Heart right ventricle (tissue), 16 donors: ENCODE measurements at regions of chr11 and their contacts with region 1.

Region 1: GRCh38 chr11:2892215-2893020 is 6.8 kb upstream of the CDKN1C start:
- DNase-seq: peak; percentile 57 to 83
- ATAC-seq: peak; percentile 24 to 78 (median 64)
- H3K4me3 ChIP-seq: peak overlapping the region in 9 of 10 donors; percentile 41 to 63 (median 58)
- H3K27ac ChIP-seq: peak overlapping the region in 9 of 10 donors; percentile 25 to 89 (median 71)
- H3K4me1 ChIP-seq: peaks cover 6 to 42% (median 35%) of the 10 kb centered on the region in 9 donors
- H3K27me3 ChIP-seq: no peaks in the 10 kb centered on the region
- CTCF ChIP-seq: peak; percentile 91 to 97 (median 93)

Region 2: DNA sequence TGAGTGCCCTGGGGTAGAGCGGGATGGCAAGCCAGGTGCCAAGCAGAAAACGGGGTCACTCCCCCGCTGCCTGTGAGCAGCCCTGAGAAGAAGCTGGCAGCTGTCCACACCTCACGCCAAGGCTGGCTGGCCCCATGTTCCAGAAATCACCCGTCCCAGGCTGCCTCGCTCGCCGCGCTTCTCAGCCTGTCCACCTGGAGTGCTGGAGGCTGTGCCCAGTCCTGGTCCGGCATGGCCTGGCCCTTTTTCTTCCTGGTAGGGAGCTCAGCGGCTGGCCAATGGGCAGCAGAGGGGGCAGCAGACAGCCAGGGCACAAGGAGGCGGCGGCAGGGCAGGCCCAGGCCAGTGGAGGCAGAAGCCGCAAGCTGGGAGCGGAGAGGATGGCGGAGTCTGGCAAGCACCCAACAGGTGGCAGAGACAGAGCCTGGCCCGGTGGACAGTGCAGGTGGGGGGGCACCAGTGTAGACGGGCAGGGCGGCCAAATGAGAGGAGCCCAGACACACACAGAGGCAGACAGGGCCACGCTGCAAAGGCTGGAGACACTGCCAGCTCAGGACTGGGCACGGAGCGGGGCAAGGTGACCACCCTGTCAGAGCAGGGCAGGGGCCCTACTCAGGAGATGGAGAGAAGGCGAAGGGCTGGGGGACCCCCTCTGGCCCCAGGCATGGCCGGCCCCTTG is 683.6 kb before region 1 on chr11:
- intact Hi-C with region 1: loop called in 1 of 10 experiments (anchors 10 kb)
- DNase-seq: peak in 1 of 2 donors; percentile 2
- ATAC-seq: peak in 3 of 8 donors; percentile 18 to 33 (median 19)
- H3K4me3 ChIP-seq: no peak overlapping the region
- H3K27ac ChIP-seq: no peak overlapping the region
- H3K4me1 ChIP-seq: peaks cover 0 to 4% (median 0%) of the 10 kb centered on the region in 9 donors
- H3K27me3 ChIP-seq: peaks cover 0 to 15% (median 3%) of the 10 kb centered on the region in 7 donors
- CTCF ChIP-seq: no peak

Region 3: DNA sequence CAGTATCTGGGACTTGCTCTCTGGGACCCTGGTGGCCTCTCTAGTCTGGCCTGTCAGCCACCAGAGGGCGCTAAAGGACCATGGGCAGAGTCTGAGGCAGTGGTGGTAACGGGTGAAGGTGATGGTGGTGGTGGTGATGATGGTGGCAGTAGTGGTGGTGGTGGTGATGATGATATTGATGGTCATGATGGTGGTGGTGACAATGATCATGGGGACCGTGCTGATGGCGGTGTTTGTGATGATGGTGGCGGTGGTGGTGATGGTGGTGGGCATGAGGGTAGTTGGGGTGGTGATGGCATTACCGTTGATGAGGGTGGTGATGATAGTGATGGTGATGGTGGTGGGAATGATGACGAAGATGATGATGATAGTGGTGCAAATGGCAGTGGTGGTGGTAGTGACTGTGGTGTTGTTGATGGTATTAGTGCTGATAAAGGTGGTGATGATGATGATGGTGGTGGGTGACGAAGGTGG is 464.1 kb before region 1 on chr11:
- intact Hi-C with region 1: loop called (anchors 1 to 5 kb)
- DNase-seq: peak; percentile 78 to 79
- ATAC-seq: peak; percentile 74 to 90 (median 83)
- H3K4me3 ChIP-seq: no peak overlapping the region
- H3K27ac ChIP-seq: no peak overlapping the region
- H3K4me1 ChIP-seq: no peaks in the 10 kb centered on the region
- H3K27me3 ChIP-seq: peaks cover 0 to 5% (median 0%) of the 10 kb centered on the region in 7 donors
- CTCF ChIP-seq: peak; percentile 73 to 90 (median 86)

Region 4: GRCh38 chr11:2444821-2445745 is 447.3 kb before region 1 on chr11 and contains the start of gene KCNQ1:
- intact Hi-C with region 1: loop called in 1 of 10 experiments (anchors 5 kb)
- DNase-seq: peak in 1 of 2 donors; percentile 68
- ATAC-seq: peak; percentile 38 to 83 (median 76)
- H3K4me3 ChIP-seq: peak within 1 kb of the TSS; percentile 32 to 60 (median 54)
- H3K27ac ChIP-seq: peak within 1 kb of the TSS in 8 of 10 donors; percentile 47 to 82 (median 58)
- H3K4me1 ChIP-seq: peaks cover 3 to 54% (median 40%) of the 10 kb centered on the region in 9 donors
- H3K27me3 ChIP-seq: peaks cover 0 to 15% (median 5%) of the 10 kb centered on the region in 7 donors
- CTCF ChIP-seq: peak in 1 of 9 donors; percentile 13
- total RNA-seq, gene KCNQ1: 28.9 to 48.2 (median 36.4) TPM

Region 5: GRCh38 chr11:2532704-2533586 is 359.5 kb before region 1 on chr11:
- intact Hi-C with region 1: loop called (anchors 1 to 2 kb)
- DNase-seq: peak; percentile 89 to 93
- ATAC-seq: peak; percentile 76 to 95 (median 88)
- H3K4me3 ChIP-seq: peak overlapping the region in 6 of 10 donors; percentile 23 to 48 (median 38)
- H3K27ac ChIP-seq: peak overlapping the region in 9 of 10 donors; percentile 1 to 69 (median 54)
- H3K4me1 ChIP-seq: peaks cover 13 to 28% (median 21%) of the 10 kb centered on the region in 9 donors
- H3K27me3 ChIP-seq: no peaks in the 10 kb centered on the region
- CTCF ChIP-seq: peak; percentile 99 to 100 (median 99)